WTC11 (cell line): ENCODE measurements at regions of chr19 and their contacts with region 1.

Region 1: DNA sequence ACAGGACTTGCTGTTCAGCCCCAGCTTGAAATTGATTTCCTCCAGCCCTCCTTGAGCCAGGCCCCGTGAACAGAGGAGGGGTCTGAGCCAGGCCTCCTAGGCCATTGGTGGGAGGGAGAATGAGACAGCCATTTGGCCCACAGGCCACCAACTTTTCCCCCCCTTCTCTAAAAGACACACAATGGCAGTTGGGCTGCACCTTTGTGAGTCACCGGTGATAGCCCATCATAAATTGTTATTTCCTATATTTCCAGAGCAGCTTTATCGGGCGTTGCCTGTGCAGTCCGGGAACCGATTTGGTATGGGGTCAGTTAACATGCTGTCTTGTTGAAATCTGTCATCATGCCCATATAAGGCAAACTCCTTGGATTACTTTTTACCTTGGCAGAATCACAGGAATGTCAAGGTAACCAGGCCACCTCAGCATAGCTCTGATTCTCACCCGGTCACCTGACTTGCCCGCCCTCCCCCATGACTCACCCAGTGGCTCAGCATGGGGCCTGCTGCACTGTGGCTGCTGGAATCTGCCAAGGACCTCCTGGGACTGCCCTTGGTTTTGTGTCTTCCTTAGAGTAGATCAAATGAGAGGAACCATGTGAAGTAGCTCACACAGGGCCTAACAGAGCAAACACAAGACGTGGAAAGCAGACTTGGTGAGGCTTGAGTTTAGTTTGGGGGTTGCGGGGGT is 36.1 kb downstream of the ACTN4 start:
- DNase-seq: peak; percentile 81
- ATAC-seq: peak; percentile 67
- H3K4me3 Mint-ChIP-seq: peak overlapping the region; percentile 40; the same call in 1 of the 2 replicates
- H3K27ac Mint-ChIP-seq: peak overlapping the region; percentile 99
- H3K4me1 Mint-ChIP-seq: peaks cover 78% of the 10 kb centered on the region
- H3K27me3 Mint-ChIP-seq: no peaks in the 10 kb centered on the region
- CTCF ChIP-seq: no peak

Region 2: GRCh38 chr19:38640368-38640767 is 43.2 kb before region 1 on chr19:
- CTCF ChIA-PET with region 1: interaction called, 12 read pairs
- POLR2A ChIA-PET with region 1: interaction called, 7 read pairs
- DNase-seq: no peak
- ATAC-seq: no peak
- H3K4me3 Mint-ChIP-seq: no peak overlapping the region
- H3K27ac Mint-ChIP-seq: peak overlapping the region; percentile 19; the same call in 1 of the 2 replicates
- H3K4me1 Mint-ChIP-seq: peaks cover 30% of the 10 kb centered on the region
- H3K27me3 Mint-ChIP-seq: no peaks in the 10 kb centered on the region
- CTCF ChIP-seq: no peak

Region 3: DNA sequence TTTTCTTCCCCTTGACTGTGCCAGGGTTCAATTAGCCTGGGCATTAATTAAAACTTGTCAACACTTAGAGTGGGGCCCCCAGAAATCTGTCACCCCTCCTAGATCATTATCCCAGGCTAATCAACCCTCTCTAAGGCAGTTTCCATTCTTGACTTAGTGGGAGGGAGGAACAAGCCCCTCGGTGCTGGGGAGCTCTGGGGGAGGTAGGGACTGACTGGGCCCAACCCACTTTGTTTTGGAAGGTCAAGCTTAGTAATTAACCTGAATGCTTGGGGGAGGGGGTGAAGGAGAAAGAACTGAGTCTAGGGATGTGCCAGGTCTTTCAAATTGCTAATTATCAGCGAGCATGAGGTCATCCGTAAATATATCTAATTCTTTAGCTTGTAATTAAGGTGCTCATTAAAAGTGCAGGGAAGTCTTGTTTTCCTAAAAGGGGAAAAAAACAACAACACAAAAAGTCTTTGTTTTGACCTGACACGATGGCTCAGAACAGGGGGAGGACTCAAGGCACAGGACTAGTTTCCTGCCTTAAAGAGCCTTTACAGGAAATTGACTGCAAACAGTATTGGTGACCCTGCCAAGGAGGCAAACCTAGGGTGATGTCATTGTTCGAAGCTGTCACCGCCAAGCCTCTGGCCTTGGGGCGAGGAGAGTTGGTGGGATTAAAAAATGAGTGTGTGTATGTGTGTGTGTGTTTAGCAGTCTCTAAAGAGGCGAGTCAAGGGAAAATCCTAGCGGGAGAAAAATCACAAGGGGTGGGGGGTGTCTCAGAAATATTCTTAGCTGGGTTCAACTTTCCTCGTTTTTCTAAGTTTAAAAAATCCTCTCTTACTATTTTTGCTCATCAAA is 16.6 kb before region 1 on chr19:
- CTCF ChIA-PET with region 1: interaction called, 20 read pairs
- POLR2A ChIA-PET with region 1: interaction called, 23 read pairs
- DNase-seq: no peak
- ATAC-seq: peak; percentile 34
- H3K4me3 Mint-ChIP-seq: peak overlapping the region; percentile 34
- H3K27ac Mint-ChIP-seq: peak overlapping the region; percentile 100
- H3K4me1 Mint-ChIP-seq: peaks cover 98% of the 10 kb centered on the region
- H3K27me3 Mint-ChIP-seq: no peaks in the 10 kb centered on the region
- CTCF ChIP-seq: no peak